ENCODE measurements at regions of chr3 and their contacts with region 1.

Region 1: GRCh38 chr3:55180936-55181535 is 253.2 kb upstream of the LRTM1 start:
- DNase-seq: no peak
- ATAC-seq: no peak

Region 2: GRCh38 chr3:54853573-54854404 is 327.2 kb before region 1 on chr3:
- intact Hi-C with region 1: loop called (anchors 5 kb)
- DNase-seq: peak; percentile 88
- ATAC-seq: peak; percentile 86

Region 3: GRCh38 chr3:54870423-54870822 is 310.6 kb before region 1 on chr3:
- intact Hi-C with region 1: loop called (anchors 5 kb)
- DNase-seq: no peak
- ATAC-seq: peak; percentile 63

Region 4: GRCh38 chr3:54951405-54951804 is 229.6 kb before region 1 on chr3:
- intact Hi-C with region 1: loop called (anchors 5 kb)
- DNase-seq: peak; percentile 87
- ATAC-seq: peak; percentile 96

Region 5: DNA sequence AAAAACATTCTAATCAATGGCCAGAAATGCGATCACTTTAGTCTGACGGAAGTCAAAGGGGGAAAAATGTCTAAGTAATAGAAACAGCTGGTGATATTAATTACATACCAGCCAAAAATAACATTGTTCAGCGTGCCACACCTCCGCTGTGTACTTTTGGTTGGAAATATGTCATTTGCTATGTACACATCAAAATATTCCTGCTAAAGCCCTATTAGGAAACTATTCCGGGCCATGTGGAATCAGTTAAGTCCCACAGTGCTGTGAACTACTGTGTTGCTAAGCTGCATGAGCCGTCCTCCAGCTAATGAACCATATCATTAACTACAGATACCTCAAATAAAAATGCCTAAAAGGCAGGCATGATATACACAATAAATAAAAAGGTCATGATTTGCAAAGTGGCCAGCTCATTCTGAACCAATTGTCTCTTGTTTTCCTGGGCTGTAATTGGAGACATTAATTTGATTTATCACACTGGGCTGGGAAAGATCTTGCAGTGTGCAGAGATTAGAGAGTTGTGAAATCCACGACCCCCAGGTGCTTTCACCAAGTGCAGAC is 52.7 kb before region 1 on chr3:
- intact Hi-C with region 1: no loop called
- DNase-seq: no peak
- ATAC-seq: no peak

Measured in Right ventricle myocardium inferior (tissue), 1 donor.